GM10248 (cell line): ENCODE measurements at regions of chr11 and their contacts with region 1.

Region 1: DNA sequence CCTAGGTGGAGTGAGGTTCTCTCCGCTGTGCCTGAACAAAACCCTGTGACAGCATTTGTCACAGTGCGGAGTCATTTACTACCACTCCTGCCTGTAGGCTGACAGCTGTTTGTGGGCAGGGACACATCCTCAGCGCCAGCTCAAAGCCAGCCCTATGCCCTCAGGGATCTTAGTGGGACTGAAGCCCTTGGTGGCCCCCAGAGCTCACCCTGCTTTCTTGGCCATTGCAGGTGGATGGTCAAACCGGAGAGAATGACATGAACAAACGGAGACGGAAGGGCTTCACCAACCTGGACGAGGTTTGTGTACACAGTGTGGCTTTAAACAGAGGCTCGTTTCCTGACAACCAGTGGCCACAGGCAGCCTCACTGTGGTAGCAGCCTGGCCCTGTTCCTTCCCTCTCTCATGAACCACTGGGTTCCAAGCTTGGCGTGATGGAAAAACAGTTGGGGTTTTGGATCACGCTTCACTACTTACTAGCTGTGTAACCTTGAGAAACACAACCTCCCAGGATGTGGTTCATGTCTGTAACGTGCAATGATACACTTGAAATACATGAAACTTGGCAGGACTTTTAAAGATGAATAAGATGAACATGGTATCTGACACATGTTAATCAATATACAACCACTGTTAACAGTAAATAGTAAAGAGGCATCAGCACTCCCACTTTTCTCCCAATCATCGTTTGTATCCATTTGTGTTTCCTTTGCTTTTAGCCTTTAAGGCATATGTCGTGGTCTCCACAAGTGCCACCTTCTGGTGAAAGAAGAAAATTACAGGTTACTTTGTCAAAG is 125.8 kb downstream of the MICAL2 start:
- DNase-seq: peak; percentile 51
- CTCF ChIP-seq: peak; percentile 54

Region 2: DNA sequence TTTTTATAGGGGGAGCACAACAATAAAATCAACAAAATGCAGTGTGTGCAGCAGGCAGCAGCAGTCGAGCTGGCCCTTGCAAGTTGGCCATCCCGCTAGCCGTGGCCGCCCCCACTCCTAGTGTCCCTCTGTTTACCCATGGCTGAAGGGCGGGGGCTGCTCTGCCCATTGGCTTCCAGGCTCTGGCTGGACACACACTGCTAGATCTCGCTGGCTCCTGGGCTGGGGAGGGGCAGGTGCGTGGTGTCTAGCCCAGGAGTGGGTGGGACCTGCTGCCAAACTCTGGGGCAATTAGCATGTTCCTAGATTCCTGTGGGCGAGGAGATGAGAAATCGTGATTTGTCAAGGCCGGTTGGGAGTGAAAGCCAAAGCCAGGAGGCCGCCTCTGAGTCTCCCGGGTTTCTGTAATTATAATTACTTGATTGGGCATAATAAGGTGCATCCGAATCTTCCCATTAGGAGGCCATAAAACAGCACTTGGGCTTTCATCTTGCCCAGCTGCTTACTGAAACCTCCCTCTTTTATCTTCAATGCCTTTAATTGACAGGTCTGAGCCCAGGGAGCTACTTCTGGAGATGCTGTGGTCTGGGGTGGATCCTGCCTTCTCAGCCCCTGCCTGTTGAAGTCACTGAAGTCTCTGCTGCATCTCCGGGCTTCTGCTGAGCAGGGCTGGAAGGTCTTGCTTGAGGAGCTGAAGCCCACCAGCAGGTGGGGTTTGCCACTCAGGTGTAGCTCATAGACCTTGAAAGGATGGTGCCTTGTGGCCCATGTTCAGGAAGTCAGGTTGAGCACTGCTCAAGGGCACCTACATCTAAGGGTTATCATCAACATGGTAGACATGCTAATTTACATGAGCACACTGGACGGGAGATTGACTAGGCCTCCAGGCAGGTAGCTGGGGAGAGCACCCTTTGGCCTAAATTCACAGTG is 183.2 kb before region 1 on chr11:
- CTCF ChIA-PET with region 1: interaction called, 66 read pairs
- POLR2A ChIA-PET with region 1: no interaction called
- DNase-seq: no peak
- CTCF ChIP-seq: no peak

Region 3: GRCh38 chr11:12159351-12160099 is 76.6 kb before region 1 on chr11:
- CTCF ChIA-PET with region 1: interaction called, 30 read pairs
- POLR2A ChIA-PET with region 1: no interaction called
- DNase-seq: no peak
- CTCF ChIP-seq: no peak

Region 4: GRCh38 chr11:12216671-12217374 is 19.3 kb before region 1 on chr11:
- CTCF ChIA-PET with region 1: interaction called, 43 read pairs
- POLR2A ChIA-PET with region 1: no interaction called
- DNase-seq: no peak
- CTCF ChIP-seq: no peak

Region 5: DNA sequence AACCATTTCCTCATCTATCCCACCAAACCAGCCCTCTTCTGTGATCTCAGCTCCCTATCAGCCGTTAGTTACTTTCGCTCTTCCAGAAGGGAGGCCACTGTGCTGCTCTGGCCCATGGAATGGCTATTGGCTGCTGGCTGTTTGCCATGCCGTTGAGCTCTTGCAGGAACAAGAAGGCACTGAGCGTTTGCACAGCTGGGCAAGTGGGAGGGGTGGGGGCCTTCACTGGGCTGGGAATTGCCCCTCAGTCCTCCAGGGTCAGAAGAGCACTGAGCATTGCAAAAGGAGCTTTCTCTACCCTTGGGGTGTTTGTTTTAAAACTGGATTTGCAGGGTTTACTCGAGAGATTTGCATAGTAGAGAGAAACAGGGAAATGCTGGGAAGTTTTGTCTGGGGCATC is 12.2 kb after region 1 on chr11:
- CTCF ChIA-PET with region 1: interaction called, 26 read pairs
- POLR2A ChIA-PET with region 1: no interaction called
- DNase-seq: no peak
- CTCF ChIP-seq: no peak

Region 6: GRCh38 chr11:12281571-12282478 is 45.7 kb after region 1 on chr11:
- CTCF ChIA-PET with region 1: interaction called, 20 read pairs
- POLR2A ChIA-PET with region 1: no interaction called
- DNase-seq: peak; percentile 82
- CTCF ChIP-seq: peak; percentile 98